PC-3 (cell line): ENCODE measurements at regions of chr10 and their contacts with region 1.

Region 1: GRCh38 chr10:28581916-28582315 is 49.0 kb downstream of the WAC start:
- DNase-seq: no peak
- ATAC-seq: no peak
- H3K4me3 ChIP-seq: no peak overlapping the region
- H3K27ac ChIP-seq: no peak overlapping the region
- H3K4me1 ChIP-seq: no peaks in the 10 kb centered on the region
- H3K27me3 ChIP-seq: no peaks in the 10 kb centered on the region
- CTCF ChIP-seq: no peak

Region 2: DNA sequence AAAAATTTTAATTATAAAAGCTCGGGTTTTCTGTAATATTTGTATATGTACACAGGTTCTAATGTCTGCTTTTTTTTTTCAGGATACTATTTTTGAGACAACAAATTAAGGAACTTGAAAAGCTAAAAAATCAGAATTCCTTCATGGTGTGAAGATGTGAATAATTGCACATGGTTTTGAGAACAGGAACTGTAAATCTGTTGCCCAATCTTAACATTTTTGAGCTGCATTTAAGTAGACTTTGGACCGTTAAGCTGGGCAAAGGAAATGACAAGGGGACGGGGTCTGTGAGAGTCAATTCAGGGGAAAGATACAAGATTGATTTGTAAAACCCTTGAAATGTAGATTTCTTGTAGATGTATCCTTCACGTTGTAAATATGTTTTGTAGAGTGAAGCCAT is 37.5 kb after region 1 on chr10:
- CTCF ChIA-PET with region 1: no interaction called
- POLR2A ChIA-PET with region 1: interaction called, 11 read pairs
- intact Hi-C with region 1: no loop called
- DNase-seq: no peak
- ATAC-seq: no peak
- H3K4me3 ChIP-seq: no peak overlapping the region
- H3K27ac ChIP-seq: no peak overlapping the region
- H3K4me1 ChIP-seq: no peaks in the 10 kb centered on the region
- H3K27me3 ChIP-seq: no peaks in the 10 kb centered on the region
- CTCF ChIP-seq: no peak